ENCODE measurements at regions of chr1 and their contacts with region 1.

Region 1: GRCh38 chr1:35451125-35451528 is 106.1 kb downstream of the KIAA0319L start:
- DNase-seq: peak; percentile 87
- H3K4me3 Mint-ChIP-seq: no peak overlapping the region
- H3K27ac Mint-ChIP-seq: peak overlapping the region; percentile 80
- H3K4me1 Mint-ChIP-seq: peaks cover 23% of the 10 kb centered on the region
- H3K27me3 Mint-ChIP-seq: no peaks in the 10 kb centered on the region

Region 2: GRCh38 chr1:35466120-35466519 is 15.0 kb after region 1 on chr1:
- CTCF ChIA-PET with region 1: interaction called, 10 read pairs
- DNase-seq: no peak
- H3K4me3 Mint-ChIP-seq: no peak overlapping the region
- H3K27ac Mint-ChIP-seq: no peak overlapping the region
- H3K4me1 Mint-ChIP-seq: peaks cover 2% of the 10 kb centered on the region
- H3K27me3 Mint-ChIP-seq: no peaks in the 10 kb centered on the region

Region 3: DNA sequence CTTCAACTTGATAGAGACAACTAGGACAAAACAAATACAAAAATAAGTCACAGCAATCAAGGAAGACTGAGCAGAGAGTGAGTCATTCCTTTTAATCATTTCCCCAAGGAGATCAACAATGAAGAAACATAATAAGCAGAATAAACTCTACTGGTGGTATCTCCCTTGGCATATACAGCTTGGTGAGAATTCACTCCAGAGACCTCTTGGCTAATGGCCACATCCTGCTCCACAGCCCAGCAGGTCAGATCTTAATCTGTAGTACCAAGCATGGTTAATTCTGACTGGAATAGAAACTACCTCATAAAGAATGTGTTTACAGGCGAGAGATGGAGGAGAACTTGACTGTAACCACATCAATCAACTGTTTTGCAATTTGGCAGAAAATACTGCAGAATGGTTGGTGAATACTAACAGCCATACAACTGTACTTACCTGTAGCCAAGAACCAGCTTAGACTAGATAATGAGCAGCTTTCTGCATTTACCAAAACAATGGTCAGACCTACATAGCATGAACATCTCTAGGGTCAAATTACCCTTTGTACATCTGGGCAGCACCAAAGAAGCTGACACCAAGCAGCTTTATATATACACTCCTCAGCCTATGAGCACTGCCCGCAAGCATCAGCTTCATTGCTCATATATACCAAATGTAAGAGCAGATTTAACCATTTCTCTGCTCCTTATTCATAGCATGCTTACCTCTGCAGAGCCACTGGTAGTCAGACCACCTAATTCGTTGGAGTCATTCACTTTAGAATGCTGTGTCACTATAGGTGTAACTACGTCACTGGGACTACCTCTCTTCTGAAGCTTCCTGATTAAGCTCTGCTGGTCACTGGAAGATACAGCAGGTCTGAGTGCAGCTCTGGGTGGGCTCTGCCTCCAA is 55.0 kb after region 1 on chr1:
- CTCF ChIA-PET with region 1: interaction called, 26 read pairs
- DNase-seq: peak; percentile 80
- H3K4me3 Mint-ChIP-seq: peak overlapping the region; percentile 61
- H3K27ac Mint-ChIP-seq: peak overlapping the region; percentile 99
- H3K4me1 Mint-ChIP-seq: peaks cover 60% of the 10 kb centered on the region
- H3K27me3 Mint-ChIP-seq: no peaks in the 10 kb centered on the region

Region 4: GRCh38 chr1:35544978-35545377 is 93.9 kb after region 1 on chr1:
- CTCF ChIA-PET with region 1: interaction called, 57 read pairs
- DNase-seq: peak; percentile 69
- H3K4me3 Mint-ChIP-seq: no peak overlapping the region
- H3K27ac Mint-ChIP-seq: no peak overlapping the region
- H3K4me1 Mint-ChIP-seq: peaks cover 22% of the 10 kb centered on the region
- H3K27me3 Mint-ChIP-seq: no peaks in the 10 kb centered on the region

Region 5: GRCh38 chr1:35564037-35564883 is 113.1 kb after region 1 on chr1:
- CTCF ChIA-PET with region 1: interaction called, 171 read pairs
- DNase-seq: peak; percentile 91
- H3K4me3 Mint-ChIP-seq: no peak overlapping the region
- H3K27ac Mint-ChIP-seq: no peak overlapping the region
- H3K4me1 Mint-ChIP-seq: peaks cover 16% of the 10 kb centered on the region
- H3K27me3 Mint-ChIP-seq: no peaks in the 10 kb centered on the region

Region 6: GRCh38 chr1:35715568-35716002 is 264.5 kb after region 1 on chr1:
- CTCF ChIA-PET with region 1: interaction called, 14 read pairs
- DNase-seq: peak; percentile 87
- H3K4me3 Mint-ChIP-seq: no peak overlapping the region
- H3K27ac Mint-ChIP-seq: no peak overlapping the region
- H3K4me1 Mint-ChIP-seq: peaks cover 31% of the 10 kb centered on the region
- H3K27me3 Mint-ChIP-seq: peaks cover 3% of the 10 kb centered on the region